CD8-positive, alpha-beta T cell (primary cell): ENCODE measurements at regions of chr12 and their contacts with region 1.

Region 1: DNA sequence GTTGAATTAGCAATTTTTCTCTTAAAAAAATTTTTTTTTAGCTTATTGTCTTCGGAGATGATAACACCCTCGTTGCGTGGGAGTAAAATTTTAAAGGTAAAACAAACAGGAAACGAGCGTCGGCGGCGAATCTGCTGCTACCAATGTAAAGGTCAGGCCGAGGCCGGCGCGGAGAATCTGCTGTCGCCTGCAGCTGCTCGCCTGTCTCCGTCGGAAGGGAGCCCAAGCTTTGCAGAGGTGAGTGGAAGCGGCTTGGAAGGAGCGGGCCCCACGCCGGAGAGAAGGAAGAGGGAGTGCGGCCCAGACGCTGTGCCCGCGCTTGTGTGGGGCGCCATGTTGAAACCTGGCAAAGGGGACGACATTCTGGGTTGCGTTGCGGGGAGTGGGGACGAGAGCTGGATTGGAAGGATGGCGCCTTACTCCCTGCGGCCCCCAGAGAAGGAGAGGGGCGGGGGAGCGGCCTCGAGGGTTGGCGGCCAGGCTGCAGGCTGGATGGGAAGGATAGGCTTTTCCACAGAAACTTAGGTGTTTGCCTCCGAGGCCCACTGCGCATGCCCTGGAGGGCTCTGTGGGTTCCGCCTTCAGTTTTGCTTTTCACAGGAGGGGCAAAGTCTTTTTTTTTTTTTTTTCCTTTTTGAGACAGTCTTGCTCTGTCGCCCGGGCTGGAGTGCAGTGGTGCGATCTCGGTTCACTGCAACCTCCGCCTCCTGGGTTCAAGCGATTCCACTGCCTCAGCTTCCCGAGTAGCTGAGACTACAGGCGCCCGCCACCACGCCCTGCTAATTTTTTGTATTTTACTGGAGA is at the start of gene SNRNP35:
- DNase-seq: peak; percentile 75 to 94 (median 84)
- ATAC-seq: peak; percentile 78
- H3K4me3 ChIP-seq: peak within 1 kb of the TSS; percentile 96 to 99
- H3K4me3 Mint-ChIP-seq: peak within 1 kb of the TSS; percentile 99
- H3K27ac ChIP-seq: peak within 1 kb of the TSS; percentile 97 to 99
- H3K27ac Mint-ChIP-seq: peak within 1 kb of the TSS; percentile 100
- H3K4me1 ChIP-seq: peaks cover 13% of the 10 kb centered on the region
- H3K4me1 Mint-ChIP-seq: peaks cover 31% of the 10 kb centered on the region
- H3K27me3 ChIP-seq: no peaks in the 10 kb centered on the region
- H3K27me3 Mint-ChIP-seq: no peaks in the 10 kb centered on the region
- CTCF ChIP-seq: no peak
- total RNA-seq, gene SNRNP35: 24.9 to 27.4 TPM

Region 2: DNA sequence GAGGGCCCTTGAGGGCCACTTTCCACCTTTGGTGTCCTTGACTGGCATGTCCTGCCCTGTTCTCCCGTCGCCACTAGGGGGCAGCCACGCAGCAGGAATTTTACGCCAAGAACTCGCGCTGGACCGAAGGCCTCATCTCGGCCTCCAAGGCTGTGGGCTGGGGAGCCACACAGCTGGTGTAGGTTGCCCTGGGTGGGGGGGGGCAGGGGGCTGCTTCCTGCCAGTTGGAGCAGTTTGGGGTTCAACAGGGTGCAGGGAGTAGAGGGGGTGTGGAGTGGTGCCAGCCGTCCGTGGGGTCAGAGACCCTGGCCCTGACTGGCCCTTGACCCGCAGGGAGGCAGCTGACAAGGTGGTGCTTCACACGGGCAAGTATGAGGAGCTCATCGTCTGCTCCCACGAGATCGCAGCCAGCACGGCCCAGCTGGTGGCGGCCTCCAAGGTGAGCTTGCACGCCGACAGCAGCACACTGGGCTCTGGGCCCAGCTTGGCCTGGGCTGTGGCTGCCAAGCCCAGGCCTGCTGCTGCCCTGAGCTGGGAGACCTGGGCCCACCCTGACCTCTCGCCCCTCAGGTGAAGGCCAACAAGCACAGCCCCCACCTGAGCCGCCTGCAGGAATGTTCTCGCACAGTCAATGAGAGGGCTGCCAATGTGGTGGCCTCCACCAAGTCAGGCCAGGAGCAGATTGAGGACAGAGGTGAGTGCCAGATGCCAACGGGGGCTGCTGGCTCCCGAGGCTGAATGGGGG is 597.7 kb before region 1 on chr12:
- CTCF ChIA-PET with region 1: no interaction called
- POLR2A ChIA-PET with region 1: no interaction called
- intact Hi-C with region 1: no loop called
- DNase-seq: peak; percentile 65 to 92 (median 82)
- ATAC-seq: peak; percentile 61
- H3K4me3 ChIP-seq: no peak overlapping the region
- H3K4me3 Mint-ChIP-seq: no peak overlapping the region
- H3K27ac ChIP-seq: no peak overlapping the region
- H3K27ac Mint-ChIP-seq: peak overlapping the region; percentile 57
- H3K4me1 ChIP-seq: peaks cover 5% of the 10 kb centered on the region
- H3K4me1 Mint-ChIP-seq: peaks cover 3% of the 10 kb centered on the region
- H3K27me3 ChIP-seq: no peaks in the 10 kb centered on the region
- H3K27me3 Mint-ChIP-seq: no peaks in the 10 kb centered on the region
- CTCF ChIP-seq: peak; percentile 64

Region 3: DNA sequence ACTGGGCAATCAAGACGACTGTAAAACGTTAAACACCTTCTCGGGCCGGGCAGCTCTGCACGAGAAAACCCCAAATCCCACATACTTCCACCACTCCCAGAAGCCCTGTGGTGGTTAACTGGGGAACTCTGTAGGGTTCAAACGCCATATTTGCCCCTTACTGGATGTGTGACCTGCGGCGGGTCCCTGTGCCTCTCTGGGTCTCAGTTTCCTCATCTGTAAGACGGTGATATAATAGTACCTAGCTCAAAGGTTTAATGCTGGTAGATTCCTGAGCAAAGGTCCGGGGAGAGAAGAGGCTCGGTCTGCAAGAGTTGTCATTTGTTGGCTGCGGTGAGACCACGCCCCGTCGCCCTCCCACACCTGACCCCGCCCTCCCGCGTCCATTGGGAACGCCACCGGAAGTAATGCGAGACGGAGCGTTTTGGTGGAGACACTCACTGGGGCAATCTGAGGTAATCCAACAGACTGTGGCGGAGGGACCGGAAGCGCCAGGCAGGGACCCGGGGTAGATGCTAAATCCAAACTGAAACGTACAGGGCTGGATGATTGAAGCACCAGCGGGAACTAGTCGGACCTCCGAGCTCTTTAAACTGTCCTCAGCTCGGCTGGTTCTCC is 483.8 kb before region 1 on chr12:
- CTCF ChIA-PET with region 1: no interaction called
- POLR2A ChIA-PET with region 1: no interaction called
- intact Hi-C with region 1: loop called in 1 of 2 experiments (anchors 10 kb)
- DNase-seq: peak; percentile 97 to 100 (median 99)
- ATAC-seq: peak; percentile 85
- H3K4me3 ChIP-seq: peak overlapping the region; percentile 91 to 93
- H3K4me3 Mint-ChIP-seq: peak overlapping the region; percentile 98
- H3K27ac ChIP-seq: peak overlapping the region; percentile 93 to 97
- H3K27ac Mint-ChIP-seq: peak overlapping the region; percentile 98
- H3K4me1 ChIP-seq: peaks cover 26% of the 10 kb centered on the region
- H3K4me1 Mint-ChIP-seq: peaks cover 31% of the 10 kb centered on the region
- H3K27me3 ChIP-seq: no peaks in the 10 kb centered on the region
- H3K27me3 Mint-ChIP-seq: no peaks in the 10 kb centered on the region
- CTCF ChIP-seq: no peak

Region 4: GRCh38 chr12:123436017-123436964 is 21.9 kb before region 1 on chr12 and contains the start of gene RILPL2:
- CTCF ChIA-PET with region 1: interaction called, 3 read pairs
- POLR2A ChIA-PET with region 1: interaction called, 21 read pairs
- intact Hi-C with region 1: loop called (anchors 1 kb)
- DNase-seq: peak; percentile 77 to 95 (median 90)
- ATAC-seq: peak; percentile 89
- H3K4me3 ChIP-seq: peak within 1 kb of the TSS; percentile 84 to 97
- H3K4me3 Mint-ChIP-seq: peak within 1 kb of the TSS; percentile 93
- H3K27ac ChIP-seq: peak within 1 kb of the TSS; percentile 60 to 93
- H3K27ac Mint-ChIP-seq: peak within 1 kb of the TSS; percentile 90
- H3K4me1 ChIP-seq: peaks cover 35% of the 10 kb centered on the region
- H3K4me1 Mint-ChIP-seq: peaks cover 38% of the 10 kb centered on the region
- H3K27me3 ChIP-seq: no peaks in the 10 kb centered on the region
- H3K27me3 Mint-ChIP-seq: no peaks in the 10 kb centered on the region
- CTCF ChIP-seq: no peak
- total RNA-seq, gene RILPL2: 3.4 to 3.6 TPM

Region 5: DNA sequence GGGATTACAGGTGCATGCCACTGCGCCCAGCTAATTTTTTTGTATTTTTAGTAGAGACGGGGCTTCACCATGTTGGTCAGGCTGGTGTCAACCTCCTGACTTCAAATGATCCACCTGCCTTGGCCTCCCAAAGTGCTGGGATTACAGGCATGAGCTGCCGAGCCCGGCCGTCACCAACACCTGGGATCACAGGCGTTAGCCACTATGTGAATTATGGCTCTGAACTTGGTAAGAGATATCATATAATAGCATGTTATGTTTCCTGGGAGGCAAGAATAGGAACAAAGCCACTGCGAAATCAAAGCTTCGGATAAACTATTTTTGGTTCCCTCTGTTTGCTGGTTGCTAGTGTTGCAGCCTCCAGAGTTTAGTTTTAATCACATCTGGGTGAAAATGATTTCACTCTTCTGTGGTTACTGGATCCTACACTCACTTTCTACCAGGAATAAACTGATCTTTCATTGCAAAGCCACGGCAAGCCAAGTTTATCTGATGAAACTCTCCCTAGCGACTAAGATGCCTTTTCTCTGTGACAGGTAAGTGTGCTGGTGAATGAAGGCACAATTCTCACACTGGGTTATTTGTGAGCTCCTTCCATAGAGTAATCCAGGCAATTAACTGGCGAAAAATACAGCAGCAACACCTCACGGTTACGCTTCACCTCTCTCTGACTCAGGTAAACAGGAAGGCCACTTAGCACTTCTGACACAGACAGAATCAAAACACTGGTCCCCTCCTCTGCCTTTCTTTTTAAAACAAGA is 16.5 kb after region 1 on chr12:
- CTCF ChIA-PET with region 1: interaction called, 3 read pairs
- POLR2A ChIA-PET with region 1: interaction called, 17 read pairs
- intact Hi-C with region 1: no loop called
- DNase-seq: peak in 2 of 9 experiments; percentile 25 to 36
- ATAC-seq: peak; percentile 87
- H3K4me3 ChIP-seq: no peak overlapping the region
- H3K4me3 Mint-ChIP-seq: peak overlapping the region; percentile 51
- H3K27ac ChIP-seq: peak overlapping the region; percentile 1 to 18
- H3K27ac Mint-ChIP-seq: peak overlapping the region; percentile 91
- H3K4me1 ChIP-seq: peaks cover 8% of the 10 kb centered on the region
- H3K4me1 Mint-ChIP-seq: peaks cover 21% of the 10 kb centered on the region
- H3K27me3 ChIP-seq: no peaks in the 10 kb centered on the region
- H3K27me3 Mint-ChIP-seq: no peaks in the 10 kb centered on the region
- CTCF ChIP-seq: no peak

Region 6: DNA sequence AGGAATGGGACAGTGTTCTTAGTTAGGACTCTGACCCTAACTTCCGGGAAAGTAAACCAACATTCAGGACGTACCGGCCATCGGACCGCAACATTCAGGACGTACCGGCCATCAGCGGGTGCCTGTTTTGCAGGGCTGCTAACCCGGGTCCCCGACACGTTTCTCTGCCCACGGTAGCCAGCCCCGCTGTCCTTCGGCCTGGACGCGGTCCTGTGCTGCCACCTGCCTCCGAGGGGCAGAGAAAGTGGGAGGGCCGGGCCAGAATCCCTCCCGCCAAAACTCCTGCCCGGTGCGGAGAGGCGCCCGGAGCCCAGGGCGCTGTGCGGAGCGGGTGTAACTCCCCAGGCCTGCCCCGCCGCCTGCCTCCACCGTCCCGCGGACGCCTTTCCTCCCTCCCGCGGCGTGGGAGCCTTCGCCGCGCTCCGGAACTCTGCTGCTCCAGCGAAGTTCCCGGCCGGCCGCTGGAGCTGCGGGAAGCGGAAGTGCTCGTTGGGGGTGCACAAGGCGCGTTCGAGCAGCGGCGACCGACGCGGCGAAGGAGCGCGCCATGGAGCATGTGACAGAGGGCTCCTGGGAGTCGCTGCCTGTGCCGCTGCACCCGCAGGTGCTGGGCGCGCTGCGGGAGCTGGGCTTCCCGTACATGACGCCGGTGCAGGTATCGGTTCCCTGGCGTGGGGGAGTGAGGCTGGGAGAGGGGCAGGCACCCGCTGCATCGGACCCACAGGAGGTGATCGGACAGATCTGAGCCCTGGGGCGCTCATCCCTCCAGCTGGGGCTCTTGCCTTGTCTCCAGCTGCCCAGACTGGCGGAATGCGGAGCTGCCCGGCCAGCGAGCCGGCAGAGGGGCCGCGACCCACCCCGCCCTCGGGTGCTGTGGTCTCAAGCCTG is 143.7 kb after region 1 on chr12 and contains the start of gene DDX55:
- CTCF ChIA-PET with region 1: no interaction called
- POLR2A ChIA-PET with region 1: no interaction called
- intact Hi-C with region 1: loop called (anchors 5 kb)
- DNase-seq: peak; percentile 71 to 94 (median 87)
- ATAC-seq: peak; percentile 93
- H3K4me3 ChIP-seq: peak within 1 kb of the TSS; percentile 92 to 94
- H3K4me3 Mint-ChIP-seq: peak within 1 kb of the TSS; percentile 98
- H3K27ac ChIP-seq: peak within 1 kb of the TSS; percentile 78 to 89
- H3K27ac Mint-ChIP-seq: peak within 1 kb of the TSS; percentile 94
- H3K4me1 ChIP-seq: peaks cover 16% of the 10 kb centered on the region
- H3K4me1 Mint-ChIP-seq: peaks cover 31% of the 10 kb centered on the region
- H3K27me3 ChIP-seq: no peaks in the 10 kb centered on the region
- H3K27me3 Mint-ChIP-seq: no peaks in the 10 kb centered on the region
- CTCF ChIP-seq: peak; percentile 42
- total RNA-seq, gene DDX55: 41.1 to 44.5 TPM